ENCODE measurements at regions of chr2 and their contacts with region 1.

Region 1: GRCh38 chr2:15939854-15940660 is at the start of gene MYCN:
- DNase-seq: peak; percentile 74

Region 2: GRCh38 chr2:16281451-16282336 is 341.6 kb after region 1 on chr2:
- in situ Hi-C with region 1: loop called (anchors 25 kb)
- DNase-seq: peak; percentile 60

Region 3: GRCh38 chr2:16487686-16488085 is 547.6 kb after region 1 on chr2:
- in situ Hi-C with region 1: loop called (anchors 25 kb)
- DNase-seq: peak; percentile 21

Measured in KBM-7 (cell line).